Aorta (tissue), 5 donors: ENCODE measurements at regions of chr6 and their contacts with region 1.

Region 1: GRCh38 chr6:145406508-145407182 is 328.7 kb downstream of the EPM2A start:
- DNase-seq: no peak
- ATAC-seq: no peak
- H3K4me3 ChIP-seq: no peak overlapping the region
- H3K27ac ChIP-seq: no peak overlapping the region
- H3K4me1 ChIP-seq: no peaks in the 10 kb centered on the region
- H3K27me3 ChIP-seq: no peaks in the 10 kb centered on the region

Region 2: GRCh38 chr6:146050168-146050567 is 643.5 kb after region 1 on chr6:
- intact Hi-C with region 1: loop called in 1 of 2 experiments (anchors 5 kb)
- DNase-seq: no peak
- ATAC-seq: no peak
- H3K4me3 ChIP-seq: no peak overlapping the region
- H3K27ac ChIP-seq: no peak overlapping the region
- H3K4me1 ChIP-seq: no peaks in the 10 kb centered on the region
- H3K27me3 ChIP-seq: no peaks in the 10 kb centered on the region